ENCODE measurements at regions of chr16 and their contacts with region 1.

Region 1: DNA sequence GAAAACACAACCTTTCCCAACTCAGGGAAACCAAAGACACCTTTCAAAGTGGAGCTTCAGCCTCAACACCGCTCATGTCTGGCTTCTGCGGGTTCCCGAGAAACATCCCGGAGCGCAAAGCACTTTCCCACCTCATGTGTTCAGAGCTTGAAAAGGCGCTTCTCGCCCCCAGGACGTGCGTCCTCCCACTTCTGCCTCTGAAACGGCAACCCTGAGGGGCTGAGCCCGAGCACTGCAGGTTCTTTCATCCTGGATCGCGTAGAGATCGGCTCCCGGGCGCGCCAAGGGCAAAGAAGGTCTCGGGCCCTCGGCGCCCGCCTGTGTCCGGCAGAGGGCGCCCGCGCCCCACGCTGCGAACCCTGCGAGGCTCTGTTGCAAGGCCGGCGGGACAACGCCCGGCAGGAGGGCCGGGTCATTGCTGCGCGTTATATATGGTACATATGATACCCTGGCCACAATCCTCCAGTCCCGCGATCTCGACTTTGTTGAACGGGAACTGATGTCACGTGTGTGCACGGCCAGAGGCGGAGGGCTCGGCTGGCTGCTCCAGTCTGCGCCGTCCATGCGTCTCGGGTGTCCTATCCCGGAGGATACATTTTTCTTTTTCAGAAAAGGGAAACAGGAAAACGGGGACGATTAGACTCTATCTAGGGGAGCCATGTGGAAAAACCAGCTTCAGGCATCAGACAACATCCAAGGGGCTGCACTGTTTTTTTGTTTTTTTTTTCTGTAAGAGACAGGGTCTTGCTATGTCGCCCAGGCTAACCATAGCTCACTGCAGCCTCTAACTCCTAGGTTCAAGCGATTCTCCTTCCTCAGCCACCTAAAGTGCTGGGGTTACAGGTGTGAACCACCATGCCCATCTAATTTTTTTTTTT is 19.1 kb downstream of the COQ7 start:
- DNase-seq: peak; percentile 95
- ATAC-seq: peak; percentile 98

Region 2: DNA sequence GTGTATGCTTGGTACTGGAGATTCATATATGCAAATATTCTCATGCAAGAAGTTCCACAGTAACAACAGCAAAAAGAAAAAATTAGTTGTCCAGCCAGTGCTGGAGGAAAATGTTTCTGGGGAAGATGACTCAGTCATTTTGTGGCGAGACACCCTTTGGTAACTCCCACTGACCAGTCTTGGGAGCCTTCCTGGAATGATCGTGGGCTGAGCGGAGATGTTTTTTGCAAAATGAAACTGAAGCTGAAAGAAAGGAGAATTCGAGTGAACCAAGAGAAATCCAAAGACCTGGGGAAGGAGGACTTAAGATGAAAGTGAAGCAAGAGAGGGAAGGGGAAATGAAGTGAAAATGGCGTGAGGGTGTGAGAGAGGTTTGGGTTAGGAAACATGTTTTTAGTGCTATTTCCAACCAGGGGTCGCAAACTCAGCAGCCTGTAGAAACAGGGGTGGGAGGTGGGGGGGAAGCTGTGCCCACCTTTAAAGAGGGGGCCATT is 32.4 kb after region 1 on chr16:
- intact Hi-C with region 1: no loop called
- DNase-seq: no peak
- ATAC-seq: peak; percentile 56

Region 3: GRCh38 chr16:19167710-19168370 is 81.3 kb after region 1 on chr16 and contains the start of gene SYT17:
- intact Hi-C with region 1: loop called (anchors 5 kb)
- DNase-seq: peak; percentile 78
- ATAC-seq: peak; percentile 92
- total RNA-seq, gene SYT17: 0.54 TPM

Region 4: GRCh38 chr16:19179546-19180490 is 93.3 kb after region 1 on chr16:
- intact Hi-C with region 1: loop called (anchors 1 kb)
- DNase-seq: peak; percentile 87
- ATAC-seq: peak; percentile 75

Region 5: DNA sequence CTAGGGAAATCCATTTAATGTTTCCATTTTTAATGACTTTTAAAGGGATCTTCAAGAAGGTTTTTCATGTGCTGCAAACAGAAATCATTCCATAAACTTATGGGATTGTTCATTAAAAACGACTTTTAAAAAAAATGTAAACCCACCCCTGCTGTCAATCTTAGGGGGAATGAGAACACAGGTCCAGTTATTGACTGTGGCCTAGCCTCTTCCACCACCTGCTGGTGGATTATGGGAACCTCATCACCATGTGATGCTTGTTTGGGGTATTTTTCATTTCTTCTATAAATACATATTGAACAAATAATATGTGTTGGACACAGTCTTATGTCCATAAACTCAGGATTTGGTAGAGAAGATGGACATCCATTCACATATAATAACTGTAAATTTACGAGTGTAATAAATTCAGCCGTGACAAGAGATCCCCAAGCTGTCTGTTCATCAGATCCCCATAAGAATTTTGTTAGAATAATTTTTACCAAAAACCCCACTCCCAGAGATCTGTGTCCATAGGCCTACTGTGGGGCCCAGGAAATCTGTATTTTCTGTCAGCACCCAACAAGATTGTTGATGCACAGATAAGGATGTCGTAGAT is 289.1 kb after region 1 on chr16:
- intact Hi-C with region 1: loop called (anchors 1 kb)
- DNase-seq: no peak
- ATAC-seq: no peak

Region 6: GRCh38 chr16:19502395-19503131 is 416.0 kb after region 1 on chr16:
- intact Hi-C with region 1: loop called (anchors 5 kb)
- DNase-seq: no peak
- ATAC-seq: no peak

Measured in Right ventricle myocardium inferior (tissue), 1 donor.